Aorta (tissue), 5 donors: ENCODE measurements at regions of chr12 and their contacts with region 1.

Region 1: GRCh38 chr12:49144384-49144783 is 13.2 kb upstream of the TUBA1B start:
- DNase-seq: no peak
- ATAC-seq: no peak
- H3K4me3 ChIP-seq: no peak overlapping the region
- H3K27ac ChIP-seq: no peak overlapping the region
- H3K4me1 ChIP-seq: no peaks in the 10 kb centered on the region
- H3K27me3 ChIP-seq: no peaks in the 10 kb centered on the region

Region 2: DNA sequence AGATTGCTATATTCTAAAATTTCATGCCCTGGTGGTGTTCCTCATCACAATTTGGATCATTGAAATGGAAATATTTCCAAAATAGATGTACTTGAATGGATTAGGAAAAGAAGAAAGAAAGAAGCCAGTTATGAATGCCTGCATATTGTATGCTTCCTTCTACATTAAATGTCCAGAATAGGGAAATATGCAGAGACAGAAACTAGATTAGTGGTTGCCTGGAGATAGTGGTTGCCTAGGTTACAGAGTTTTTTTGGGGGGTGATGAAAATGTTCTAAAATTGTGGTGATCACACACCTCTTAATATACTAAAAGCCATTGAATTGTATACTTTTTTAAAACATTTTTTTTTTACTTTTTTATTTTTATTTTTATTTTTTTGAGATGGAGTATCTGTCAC is 26.5 kb after region 1 on chr12:
- intact Hi-C with region 1: loop called in 1 of 2 experiments (anchors 5 kb)
- DNase-seq: no peak
- ATAC-seq: no peak
- H3K4me3 ChIP-seq: no peak overlapping the region
- H3K27ac ChIP-seq: no peak overlapping the region
- H3K4me1 ChIP-seq: no peaks in the 10 kb centered on the region
- H3K27me3 ChIP-seq: no peaks in the 10 kb centered on the region